RWPE1 (cell line): ENCODE measurements at regions of chr16 and their contacts with region 1.

Region 1: GRCh38 chr16:9090960-9091866 is at the start of gene HAPSTR1:
- DNase-seq: peak; percentile 99
- H3K27ac ChIP-seq: peak within 1 kb of the TSS; percentile 92
- CTCF ChIP-seq: no peak

Region 2: DNA sequence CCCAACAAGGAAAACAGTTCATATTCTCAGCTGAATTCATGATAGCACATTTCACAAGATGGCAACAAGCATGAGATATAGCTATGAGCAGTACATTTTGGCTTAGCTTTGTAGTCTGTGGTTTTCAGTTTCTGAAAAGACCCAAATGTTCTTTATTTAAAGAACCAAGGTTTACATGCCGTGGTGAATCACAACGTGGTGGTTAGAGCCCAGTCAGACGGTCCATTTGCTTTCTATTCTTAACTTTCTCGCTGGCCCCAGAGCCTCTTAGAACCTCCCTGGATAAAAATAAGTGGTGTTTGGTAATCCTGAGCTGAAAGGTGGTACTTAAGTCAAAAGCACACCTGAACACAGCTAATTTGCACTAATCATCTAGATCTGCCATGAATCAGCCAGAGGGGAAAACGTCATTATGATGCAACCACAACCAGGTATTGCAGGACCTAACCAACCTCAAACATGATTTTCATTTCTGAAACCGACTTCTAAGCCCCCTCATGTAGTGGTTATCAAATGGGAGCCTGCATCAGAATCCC is 18.3 kb before region 1 on chr16:
- CTCF ChIA-PET with region 1: no interaction called
- POLR2A ChIA-PET with region 1: interaction called, 10 read pairs
- DNase-seq: peak; percentile 42
- H3K27ac ChIP-seq: peak overlapping the region; percentile 65
- CTCF ChIP-seq: no peak

Region 3: GRCh38 chr16:9116141-9116540 is 24.9 kb after region 1 on chr16:
- CTCF ChIA-PET with region 1: no interaction called
- POLR2A ChIA-PET with region 1: no interaction called
- DNase-seq: no peak
- H3K27ac ChIP-seq: no peak overlapping the region
- CTCF ChIP-seq: no peak

Region 4: DNA sequence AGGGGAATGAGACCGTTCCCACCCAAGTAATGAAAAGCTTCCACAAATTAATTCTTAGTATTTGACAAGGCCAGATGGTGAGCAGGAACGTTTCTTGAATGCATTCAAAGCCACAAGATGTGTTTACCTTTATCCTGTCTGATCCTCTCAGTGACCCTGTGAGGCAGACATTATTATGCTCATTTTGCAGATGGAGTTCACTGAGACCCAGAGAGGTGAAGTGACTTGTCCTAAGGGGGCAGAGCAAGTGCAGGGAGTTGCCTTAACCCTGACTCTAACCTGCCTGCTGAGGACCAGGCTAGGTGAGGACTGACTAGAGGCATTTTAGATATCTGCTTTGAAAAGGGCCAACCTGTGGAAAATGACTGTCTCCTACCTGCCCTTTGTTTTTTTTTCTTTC is 156.9 kb after region 1 on chr16:
- CTCF ChIA-PET with region 1: no interaction called
- POLR2A ChIA-PET with region 1: no interaction called
- DNase-seq: no peak
- H3K27ac ChIP-seq: no peak overlapping the region
- CTCF ChIP-seq: no peak